IMR-90 (cell line): ENCODE measurements at regions of chr9 and their contacts with region 1.

Region 1: GRCh38 chr9:7405924-7406604 is 393.5 kb downstream of the DMAC1 start:
- DNase-seq: no peak
- ATAC-seq: no peak
- H3K4me3 ChIP-seq: no peak overlapping the region
- H3K27ac ChIP-seq: no peak overlapping the region
- H3K4me1 ChIP-seq: peaks cover 3% of the 10 kb centered on the region; the same call in 1 of the 2 replicates
- H3K27me3 ChIP-seq: no peaks in the 10 kb centered on the region
- CTCF ChIP-seq: no peak
- POLR2A ChIP-seq: no peak
- RAD21 ChIP-seq: no peak

Region 2: GRCh38 chr9:7510199-7510598 is 104.1 kb after region 1 on chr9:
- CTCF ChIA-PET with region 1: no interaction called
- POLR2A ChIA-PET with region 1: no interaction called
- dilution Hi-C with region 1: no loop called
- in situ Hi-C with region 1: no loop called
- intact Hi-C with region 1: no loop called
- DNase-seq: no peak
- ATAC-seq: peak; percentile 59
- H3K4me3 ChIP-seq: no peak overlapping the region
- H3K27ac ChIP-seq: peak overlapping the region; percentile 93; the same call in 1 of the 2 replicates
- H3K4me1 ChIP-seq: peaks cover 8% of the 10 kb centered on the region; the same call in 1 of the 2 replicates
- H3K27me3 ChIP-seq: no peaks in the 10 kb centered on the region; the same call in 1 of the 2 replicates
- CTCF ChIP-seq: no peak
- POLR2A ChIP-seq: no peak
- RAD21 ChIP-seq: no peak

Region 3: GRCh38 chr9:7549249-7549648 is 143.2 kb after region 1 on chr9:
- CTCF ChIA-PET with region 1: no interaction called
- POLR2A ChIA-PET with region 1: no interaction called
- dilution Hi-C with region 1: no loop called
- in situ Hi-C with region 1: no loop called
- intact Hi-C with region 1: no loop called
- DNase-seq: no peak
- ATAC-seq: no peak; the same call in 1 of the 2 replicates
- H3K4me3 ChIP-seq: no peak overlapping the region
- H3K27ac ChIP-seq: no peak overlapping the region
- H3K4me1 ChIP-seq: peaks cover 2% of the 10 kb centered on the region; the same call in 1 of the 2 replicates
- H3K27me3 ChIP-seq: no peaks in the 10 kb centered on the region; the same call in 1 of the 2 replicates
- CTCF ChIP-seq: no peak
- POLR2A ChIP-seq: no peak
- RAD21 ChIP-seq: no peak

Region 4: DNA sequence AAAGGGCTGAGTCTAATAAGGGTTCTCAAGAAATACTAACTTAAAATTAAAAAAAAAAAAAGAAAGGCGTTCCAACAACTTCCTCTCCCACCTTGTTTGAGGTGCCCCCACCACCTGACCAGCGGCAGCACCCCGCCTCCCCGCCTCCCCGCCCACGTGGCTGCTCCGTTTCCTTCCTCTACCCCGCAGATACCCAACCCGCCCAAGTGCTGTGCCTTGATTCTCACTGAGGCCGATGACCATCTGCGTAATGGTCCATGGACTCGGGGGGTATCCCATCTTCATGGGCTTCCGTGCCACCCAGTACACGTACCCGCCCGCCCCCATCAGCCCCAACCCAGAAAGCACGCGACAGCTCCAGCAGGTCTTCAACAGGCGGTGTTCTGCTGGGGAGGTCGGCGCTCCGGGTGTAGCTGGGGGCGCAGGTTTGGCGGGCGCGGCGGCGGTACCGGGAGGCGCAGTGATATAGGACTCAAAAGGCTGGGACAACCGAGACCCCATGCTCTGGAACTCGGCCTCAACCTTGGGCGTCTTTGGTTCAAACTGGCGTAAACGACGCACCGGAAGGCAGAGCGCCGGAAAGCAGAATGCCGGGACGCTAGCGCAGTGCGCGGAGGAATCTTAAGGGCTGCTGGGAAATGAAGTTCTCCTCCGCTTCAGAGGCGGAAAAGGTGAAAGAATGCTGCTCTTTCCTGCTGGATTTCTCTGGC is 393.3 kb after region 1 on chr9 and contains the start of gene DMAC1:
- CTCF ChIA-PET with region 1: no interaction called
- POLR2A ChIA-PET with region 1: no interaction called
- dilution Hi-C with region 1: no loop called
- in situ Hi-C with region 1: no loop called
- intact Hi-C with region 1: loop called (anchors 10 kb)
- DNase-seq: peak; percentile 84
- ATAC-seq: peak; percentile 99
- H3K4me3 ChIP-seq: peak within 1 kb of the TSS; percentile 79
- H3K27ac ChIP-seq: peak within 1 kb of the TSS; percentile 78
- H3K4me1 ChIP-seq: peaks cover 4% of the 10 kb centered on the region; the same call in 1 of the 2 replicates
- H3K27me3 ChIP-seq: no peaks in the 10 kb centered on the region
- CTCF ChIP-seq: no peak
- POLR2A ChIP-seq: peak; percentile 53; the same call in 1 of the 2 replicates
- RAD21 ChIP-seq: no peak
- total RNA-seq, gene DMAC1: 8.1 and 9.4 TPM in 2 replicates